CD14-positive monocyte (primary cell): ENCODE measurements at regions of chr10 and their contacts with region 1.

Region 1: GRCh38 chr10:48551861-48552591 is 52.8 kb downstream of the ARHGAP22 start:
- DNase-seq: peak; percentile 48 to 72 (median 59)
- H3K4me3 ChIP-seq: no peak overlapping the region
- H3K4me3 Mint-ChIP-seq: no peak overlapping the region
- H3K27ac ChIP-seq: no peak overlapping the region
- H3K27ac Mint-ChIP-seq: peak overlapping the region in 1 of 7 donors; percentile 22
- H3K4me1 ChIP-seq: peaks cover 6 to 7% of the 10 kb centered on the region in 2 donors
- H3K4me1 Mint-ChIP-seq: peaks cover 6% of the 10 kb centered on the region
- H3K27me3 ChIP-seq: no peaks in the 10 kb centered on the region
- H3K27me3 Mint-ChIP-seq: peaks cover 0 to 5% (median 0%) of the 10 kb centered on the region in 3 donors
- CTCF ChIP-seq: peak; percentile 93

Region 2: DNA sequence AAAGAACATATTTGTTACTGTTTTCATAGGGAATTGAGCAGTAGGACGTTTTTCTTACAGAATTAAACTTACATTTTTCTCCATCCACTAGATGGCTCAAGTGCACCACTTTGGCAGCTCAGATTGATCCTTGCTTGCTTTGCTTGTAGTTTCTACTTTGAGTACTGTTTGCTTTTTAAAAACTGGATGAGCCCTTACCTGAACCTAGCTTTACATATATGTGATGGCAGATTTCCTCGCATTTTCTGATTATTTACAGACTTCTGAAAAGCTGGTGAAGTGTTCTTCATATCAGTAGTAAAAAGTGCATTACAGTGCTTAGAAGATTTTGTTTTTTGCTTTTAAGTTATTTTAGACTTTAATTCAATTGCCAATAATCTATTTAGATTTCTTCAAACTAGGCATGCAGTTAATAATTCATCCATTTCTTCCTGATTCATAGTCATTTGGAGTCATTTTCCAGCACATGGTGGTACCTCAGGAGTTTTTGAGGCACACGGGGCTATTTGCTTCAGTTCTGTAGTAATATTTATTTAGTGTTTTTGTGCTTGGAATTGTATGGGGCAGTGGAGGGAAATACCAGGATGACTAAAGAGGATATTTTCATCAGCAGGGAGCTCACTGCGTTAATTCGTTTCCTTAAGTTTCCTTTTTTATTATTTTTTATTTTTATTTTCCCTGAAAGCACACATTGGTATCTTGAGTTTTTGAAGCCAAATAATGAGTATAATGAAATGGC is 188.2 kb before region 1 on chr10:
- intact Hi-C with region 1: loop called in 1 of 2 experiments (anchors 5 kb)
- DNase-seq: peak; percentile 23 to 50 (median 28)
- H3K4me3 ChIP-seq: no peak overlapping the region
- H3K4me3 Mint-ChIP-seq: no peak overlapping the region
- H3K27ac ChIP-seq: no peak overlapping the region
- H3K27ac Mint-ChIP-seq: no peak overlapping the region
- H3K4me1 ChIP-seq: no peaks in the 10 kb centered on the region
- H3K4me1 Mint-ChIP-seq: peaks cover 7% of the 10 kb centered on the region
- H3K27me3 ChIP-seq: no peaks in the 10 kb centered on the region
- H3K27me3 Mint-ChIP-seq: no peaks in the 10 kb centered on the region
- CTCF ChIP-seq: peak; percentile 79

Region 3: GRCh38 chr10:48523212-48523819 is 28.7 kb before region 1 on chr10:
- intact Hi-C with region 1: no loop called
- DNase-seq: no peak
- H3K4me3 ChIP-seq: peak overlapping the region in 1 of 3 experiments; percentile 48
- H3K4me3 Mint-ChIP-seq: peak overlapping the region in 1 of 2 donors; percentile 81
- H3K27ac ChIP-seq: no peak overlapping the region
- H3K27ac Mint-ChIP-seq: no peak overlapping the region
- H3K4me1 ChIP-seq: peaks cover 10 to 21% of the 10 kb centered on the region in 2 donors
- H3K4me1 Mint-ChIP-seq: peaks cover 21% of the 10 kb centered on the region
- H3K27me3 ChIP-seq: peaks cover 29 to 33% of the 10 kb centered on the region in 2 donors
- H3K27me3 Mint-ChIP-seq: peaks cover 36 to 60% (median 45%) of the 10 kb centered on the region in 3 donors
- CTCF ChIP-seq: no peak

Region 4: DNA sequence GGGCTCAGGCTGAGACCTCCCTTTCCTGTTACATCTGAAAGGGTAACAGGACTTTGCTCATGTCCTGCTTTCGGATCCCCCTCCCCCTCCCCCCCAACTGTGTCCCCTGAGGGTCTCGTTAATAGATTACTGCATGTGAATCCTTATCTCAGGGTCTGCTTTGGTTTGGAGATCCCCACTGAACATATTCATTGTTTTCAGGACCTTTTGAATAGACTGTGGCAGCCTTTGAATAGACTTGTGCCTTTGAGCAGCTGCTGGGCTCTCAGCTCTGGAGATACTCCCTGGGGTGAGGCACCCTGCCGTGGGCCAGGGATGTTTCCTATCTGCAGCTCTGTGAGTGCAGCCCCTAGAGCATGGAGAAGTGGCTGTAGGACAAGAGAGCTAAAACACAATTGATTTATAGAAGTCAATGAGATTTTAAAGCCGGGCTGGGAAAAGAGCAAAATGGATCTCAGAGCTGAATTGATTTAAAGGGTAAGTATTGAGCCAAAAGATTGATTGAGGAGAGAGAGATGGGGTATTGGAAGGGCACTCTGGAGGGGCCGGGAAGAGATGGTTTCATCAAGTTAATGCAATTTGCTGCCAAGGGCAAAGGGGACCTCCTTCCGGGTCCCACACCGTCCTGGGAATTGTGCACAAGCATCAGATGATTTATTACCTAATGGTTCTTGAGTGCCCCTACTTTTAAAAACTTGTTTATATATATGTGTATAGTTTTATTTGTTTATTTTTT is 42.9 kb after region 1 on chr10:
- intact Hi-C with region 1: loop called in 1 of 2 experiments (anchors 5 kb)
- DNase-seq: no peak
- H3K4me3 ChIP-seq: no peak overlapping the region
- H3K4me3 Mint-ChIP-seq: no peak overlapping the region
- H3K27ac ChIP-seq: no peak overlapping the region
- H3K27ac Mint-ChIP-seq: no peak overlapping the region
- H3K4me1 ChIP-seq: no peaks in the 10 kb centered on the region
- H3K4me1 Mint-ChIP-seq: no peaks in the 10 kb centered on the region
- H3K27me3 ChIP-seq: no peaks in the 10 kb centered on the region
- H3K27me3 Mint-ChIP-seq: peaks cover 4 to 13% (median 5%) of the 10 kb centered on the region in 3 donors
- CTCF ChIP-seq: no peak

Region 5: GRCh38 chr10:48608279-48608681 is 56.3 kb after region 1 on chr10:
- intact Hi-C with region 1: loop called in 1 of 2 experiments (anchors 5 kb)
- DNase-seq: peak in 2 of 3 donors; percentile 48 to 49
- H3K4me3 ChIP-seq: no peak overlapping the region
- H3K4me3 Mint-ChIP-seq: peak overlapping the region in 1 of 2 donors; percentile 12
- H3K27ac ChIP-seq: peak overlapping the region in 1 of 2 donors; percentile 95
- H3K27ac Mint-ChIP-seq: peak overlapping the region in 3 of 7 donors; percentile 95 to 96 (median 96)
- H3K4me1 ChIP-seq: peaks cover 60 to 68% of the 10 kb centered on the region in 2 donors
- H3K4me1 Mint-ChIP-seq: peaks cover 63% of the 10 kb centered on the region
- H3K27me3 ChIP-seq: peaks cover 0 to 3% of the 10 kb centered on the region in 2 donors
- H3K27me3 Mint-ChIP-seq: peaks cover 4 to 17% (median 5%) of the 10 kb centered on the region in 3 donors
- CTCF ChIP-seq: peak; percentile 71

Region 6: DNA sequence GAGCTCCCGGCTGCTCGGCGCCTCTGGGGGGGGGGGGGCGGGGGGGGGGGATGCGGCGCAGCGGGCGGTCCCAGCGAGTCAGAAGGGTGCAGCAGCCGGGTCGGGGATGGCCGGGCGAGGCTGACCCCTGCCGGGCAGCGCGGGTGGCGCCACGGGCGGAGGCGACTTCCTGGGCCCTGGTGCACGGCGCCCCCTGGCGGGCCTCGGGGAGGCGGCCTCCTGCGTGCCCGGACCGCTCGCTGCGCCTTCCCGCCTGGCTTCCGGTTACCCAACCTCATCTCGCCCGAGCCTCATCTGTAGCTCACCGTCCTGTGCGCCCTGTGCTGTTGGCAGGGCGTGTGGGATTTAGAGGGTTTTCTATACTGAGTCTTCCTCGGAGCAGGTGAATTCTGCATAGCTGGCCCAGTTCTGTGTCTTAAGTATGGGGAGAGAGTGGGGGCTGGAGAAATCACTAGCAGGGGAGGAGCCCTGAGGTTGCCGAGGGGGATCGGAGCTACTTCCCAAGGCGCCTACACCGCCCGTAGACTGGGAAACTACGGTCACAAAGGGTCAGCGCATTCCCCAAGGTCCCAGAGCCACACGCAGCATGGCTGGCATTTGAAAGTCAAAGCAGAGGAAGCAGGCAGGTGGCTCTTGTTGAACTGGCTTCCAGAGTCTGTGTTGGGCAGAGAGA is 104.4 kb after region 1 on chr10:
- intact Hi-C with region 1: loop called (anchors 1 kb)
- DNase-seq: peak; percentile 91 to 96 (median 91)
- H3K4me3 ChIP-seq: peak overlapping the region; percentile 24 to 74 (median 44)
- H3K4me3 Mint-ChIP-seq: peak overlapping the region; percentile 71 to 83
- H3K27ac ChIP-seq: peak overlapping the region in 1 of 2 donors; percentile 54
- H3K27ac Mint-ChIP-seq: peak overlapping the region in 2 of 7 donors; percentile 8 to 60
- H3K4me1 ChIP-seq: peaks cover 36 to 38% of the 10 kb centered on the region in 2 donors
- H3K4me1 Mint-ChIP-seq: peaks cover 28% of the 10 kb centered on the region
- H3K27me3 ChIP-seq: peaks cover 0 to 8% of the 10 kb centered on the region in 2 donors
- H3K27me3 Mint-ChIP-seq: peaks cover 18 to 37% (median 22%) of the 10 kb centered on the region in 3 donors
- CTCF ChIP-seq: peak; percentile 100